Aorta (tissue), 5 donors: ENCODE measurements at regions of chr9 and their contacts with region 1.

Region 1: DNA sequence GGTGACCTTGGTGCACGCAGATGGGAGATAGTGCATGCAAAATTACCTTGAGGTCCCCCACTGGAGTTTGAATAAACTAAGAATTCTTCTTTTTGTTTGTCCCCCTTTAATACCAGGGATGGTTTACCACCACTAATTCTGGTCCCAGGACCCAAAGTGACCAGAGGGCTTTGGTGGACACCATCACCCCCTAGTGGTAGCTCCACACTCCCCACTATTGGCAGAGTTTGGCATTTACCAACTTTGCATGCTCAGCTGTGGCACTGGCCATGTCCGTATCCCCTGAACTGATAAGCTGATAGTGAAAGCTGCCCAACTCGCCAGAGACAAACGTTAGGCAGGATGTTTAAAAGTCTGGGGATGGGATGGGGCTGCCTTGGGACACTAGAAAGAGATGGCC is 3.3 kb downstream of the ASTN2 start:
- DNase-seq: no peak
- ATAC-seq: no peak
- H3K4me3 ChIP-seq: no peak overlapping the region
- H3K27ac ChIP-seq: no peak overlapping the region
- H3K4me1 ChIP-seq: no peaks in the 10 kb centered on the region
- H3K27me3 ChIP-seq: no peaks in the 10 kb centered on the region

Region 2: DNA sequence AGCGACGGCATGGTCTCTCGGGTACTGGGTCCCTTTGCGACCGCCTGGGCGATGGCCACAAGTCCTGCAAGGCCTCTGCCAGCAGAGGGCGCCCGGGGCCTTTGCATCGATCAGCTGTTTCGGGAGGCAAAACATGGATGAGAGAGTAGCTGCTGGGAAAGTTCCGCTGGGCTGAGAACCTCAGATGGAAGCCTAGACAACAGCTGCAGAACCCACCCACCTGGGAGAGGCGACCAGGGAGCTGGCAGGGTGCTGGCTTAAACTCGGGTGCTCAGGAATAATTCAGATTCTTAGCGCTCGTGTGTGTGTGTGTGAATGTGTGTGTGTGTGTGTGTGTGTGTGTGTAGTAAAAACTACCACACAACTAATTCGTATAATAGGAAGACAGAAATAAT is 674.4 kb before region 1 on chr9:
- intact Hi-C with region 1: loop called in 1 of 2 experiments (anchors 5 kb)
- DNase-seq: peak; percentile 82 to 91
- ATAC-seq: peak; percentile 30
- H3K4me3 ChIP-seq: no peak overlapping the region
- H3K27ac ChIP-seq: no peak overlapping the region
- H3K4me1 ChIP-seq: no peaks in the 10 kb centered on the region
- H3K27me3 ChIP-seq: no peaks in the 10 kb centered on the region

Region 3: DNA sequence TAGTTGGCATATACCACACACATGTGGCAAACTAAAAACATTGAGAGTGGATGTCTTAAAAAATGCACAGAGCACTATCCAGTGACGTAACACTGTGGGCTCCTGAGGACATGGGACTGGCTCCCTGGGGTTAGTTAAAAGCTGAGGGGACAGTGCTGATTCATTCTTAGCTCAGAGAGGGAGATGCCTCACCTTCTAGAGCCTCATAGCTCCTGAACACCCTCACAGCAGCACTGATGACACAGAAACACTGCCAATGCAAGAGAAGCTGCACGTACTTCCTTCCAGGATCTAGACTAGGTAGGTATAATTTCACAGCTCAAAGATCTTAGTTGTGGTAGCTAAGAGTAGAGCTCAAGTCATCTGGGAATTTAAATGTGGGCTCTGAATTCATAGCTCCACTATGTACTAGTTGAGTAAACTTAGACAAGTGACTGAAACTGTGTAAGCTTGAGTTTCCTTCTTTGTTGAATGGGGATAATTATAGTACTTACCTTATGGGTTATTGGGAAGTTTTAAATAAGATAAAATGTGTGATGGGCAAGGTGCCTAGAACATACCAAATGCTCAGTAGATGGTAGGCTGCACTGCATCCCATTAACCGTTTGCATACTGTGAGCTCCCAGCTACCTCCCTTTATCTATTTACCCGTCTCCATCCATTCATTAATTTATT is 276.6 kb before region 1 on chr9:
- intact Hi-C with region 1: no loop called
- DNase-seq: no peak
- ATAC-seq: no peak
- H3K4me3 ChIP-seq: no peak overlapping the region
- H3K27ac ChIP-seq: no peak overlapping the region
- H3K4me1 ChIP-seq: no peaks in the 10 kb centered on the region
- H3K27me3 ChIP-seq: no peaks in the 10 kb centered on the region

Region 4: GRCh38 chr9:117247266-117247665 is 164.3 kb before region 1 on chr9:
- intact Hi-C with region 1: loop called (anchors 5 to 10 kb)
- DNase-seq: no peak
- ATAC-seq: peak; percentile 73
- H3K4me3 ChIP-seq: no peak overlapping the region
- H3K27ac ChIP-seq: no peak overlapping the region
- H3K4me1 ChIP-seq: no peaks in the 10 kb centered on the region
- H3K27me3 ChIP-seq: no peaks in the 10 kb centered on the region